ENCODE measurements at regions of chrX and their contacts with region 1.

Region 1: GRCh38 chrX:48539345-48540027 is at the start of gene TBC1D25:
- DNase-seq: peak; percentile 99
- ATAC-seq: peak; percentile 85
- H3K4me3 Mint-ChIP-seq: peak within 1 kb of the TSS; percentile 89
- H3K27ac Mint-ChIP-seq: peak within 1 kb of the TSS; percentile 98
- H3K4me1 Mint-ChIP-seq: peaks cover 16% of the 10 kb centered on the region
- H3K27me3 Mint-ChIP-seq: no peaks in the 10 kb centered on the region
- CTCF ChIP-seq: no peak
- total RNA-seq, gene TBC1D25: 11.4 to 11.9 TPM

Region 2: DNA sequence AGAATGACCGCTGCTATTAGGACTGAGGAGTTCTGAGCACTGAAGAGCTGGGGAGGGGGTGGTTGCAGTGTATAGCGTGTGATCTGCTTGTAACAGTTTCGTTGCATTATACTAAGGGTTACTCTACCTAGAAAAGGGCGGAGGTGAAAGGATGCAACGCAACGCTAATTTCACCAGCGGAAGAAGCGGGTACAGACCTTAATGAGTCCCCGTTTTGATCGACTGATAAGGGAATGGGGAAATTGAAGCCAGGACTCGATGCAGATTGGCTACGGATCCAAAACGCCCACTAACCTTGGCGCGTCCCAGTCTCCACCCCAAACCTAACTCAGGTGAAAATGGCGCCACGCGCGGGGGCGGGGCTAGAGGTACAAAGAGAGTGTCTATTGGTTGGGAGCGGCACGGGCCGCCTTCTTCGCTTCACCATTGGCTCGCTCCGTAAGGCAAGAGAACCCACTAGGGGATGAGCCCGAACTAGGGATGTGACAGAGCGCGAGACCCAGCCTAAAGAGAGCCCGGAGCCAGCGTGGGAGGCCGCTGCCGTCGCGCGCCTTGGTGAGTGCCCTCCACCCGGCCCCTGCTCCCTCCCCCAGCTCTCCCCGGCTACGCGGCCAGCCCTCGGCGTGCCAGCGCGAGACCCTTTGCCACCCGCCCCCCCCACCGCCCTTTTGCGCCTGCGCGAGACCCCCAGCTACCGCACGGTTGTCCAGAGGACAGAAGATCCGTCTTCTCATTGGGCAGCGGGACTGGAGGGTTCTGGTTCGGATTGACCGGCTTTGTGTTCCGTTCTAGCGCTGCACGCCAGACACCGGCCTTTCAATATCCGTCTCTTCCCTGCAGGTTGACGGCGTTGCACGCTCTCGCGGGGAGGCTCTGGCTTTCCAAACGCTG is 17.9 kb before region 1 on chrX and contains the start of gene EBP:
- CTCF ChIA-PET with region 1: no interaction called
- POLR2A ChIA-PET with region 1: interaction called, 12 read pairs
- intact Hi-C with region 1: no loop called
- DNase-seq: peak; percentile 98
- ATAC-seq: peak; percentile 92
- H3K4me3 Mint-ChIP-seq: peak within 1 kb of the TSS; percentile 91
- H3K27ac Mint-ChIP-seq: peak within 1 kb of the TSS; percentile 99
- H3K4me1 Mint-ChIP-seq: peaks cover 32% of the 10 kb centered on the region
- H3K27me3 Mint-ChIP-seq: no peaks in the 10 kb centered on the region
- CTCF ChIP-seq: no peak
- total RNA-seq, gene EBP: 159 to 164 TPM

Region 3: GRCh38 chrX:48574270-48575266 is 35.1 kb after region 1 on chrX and contains the start of gene RBM3:
- CTCF ChIA-PET with region 1: interaction called, 3 read pairs
- POLR2A ChIA-PET with region 1: interaction called, 16 read pairs
- intact Hi-C with region 1: loop called (anchors 5 kb)
- DNase-seq: peak; percentile 94
- ATAC-seq: peak; percentile 94
- H3K4me3 Mint-ChIP-seq: peak within 1 kb of the TSS; percentile 83
- H3K27ac Mint-ChIP-seq: peak within 1 kb of the TSS; percentile 95
- H3K4me1 Mint-ChIP-seq: peaks cover 16% of the 10 kb centered on the region
- H3K27me3 Mint-ChIP-seq: no peaks in the 10 kb centered on the region
- CTCF ChIP-seq: peak; percentile 41
- total RNA-seq, gene RBM3: 191 to 195 TPM

Region 4: GRCh38 chrX:48617542-48618340 is 78.3 kb after region 1 on chrX:
- CTCF ChIA-PET with region 1: no interaction called
- POLR2A ChIA-PET with region 1: no interaction called
- intact Hi-C with region 1: no loop called
- DNase-seq: no peak
- ATAC-seq: no peak
- H3K4me3 Mint-ChIP-seq: no peak overlapping the region
- H3K27ac Mint-ChIP-seq: no peak overlapping the region
- H3K4me1 Mint-ChIP-seq: peaks cover 3% of the 10 kb centered on the region
- H3K27me3 Mint-ChIP-seq: no peaks in the 10 kb centered on the region
- CTCF ChIP-seq: no peak

Region 5: DNA sequence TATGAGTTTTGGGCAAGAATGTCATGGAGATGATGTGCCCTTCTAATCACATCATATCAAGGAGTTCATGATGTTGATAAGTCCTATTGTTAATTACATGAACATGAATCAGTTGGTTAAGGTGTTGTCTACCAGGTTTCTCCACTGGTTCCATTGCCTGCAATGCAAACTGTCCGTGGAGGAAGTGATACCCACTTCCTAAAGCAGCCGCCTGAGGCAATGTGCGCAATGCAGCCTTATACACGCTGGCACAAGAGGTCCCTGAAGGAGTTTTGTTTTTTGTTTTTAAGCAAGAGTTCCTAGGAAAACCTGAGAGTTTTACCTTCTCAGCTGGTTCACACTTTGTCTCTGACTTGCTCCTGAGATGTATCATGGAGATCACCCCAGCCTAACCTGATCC is 589.9 kb after region 1 on chrX:
- CTCF ChIA-PET with region 1: no interaction called
- POLR2A ChIA-PET with region 1: no interaction called
- intact Hi-C with region 1: no loop called
- DNase-seq: no peak
- ATAC-seq: no peak
- H3K4me3 Mint-ChIP-seq: no peak overlapping the region
- H3K27ac Mint-ChIP-seq: no peak overlapping the region
- H3K4me1 Mint-ChIP-seq: no peaks in the 10 kb centered on the region
- H3K27me3 Mint-ChIP-seq: no peaks in the 10 kb centered on the region
- CTCF ChIP-seq: no peak